H1 (cell line): ENCODE measurements at regions of chr17 and their contacts with region 1.

Region 1: DNA sequence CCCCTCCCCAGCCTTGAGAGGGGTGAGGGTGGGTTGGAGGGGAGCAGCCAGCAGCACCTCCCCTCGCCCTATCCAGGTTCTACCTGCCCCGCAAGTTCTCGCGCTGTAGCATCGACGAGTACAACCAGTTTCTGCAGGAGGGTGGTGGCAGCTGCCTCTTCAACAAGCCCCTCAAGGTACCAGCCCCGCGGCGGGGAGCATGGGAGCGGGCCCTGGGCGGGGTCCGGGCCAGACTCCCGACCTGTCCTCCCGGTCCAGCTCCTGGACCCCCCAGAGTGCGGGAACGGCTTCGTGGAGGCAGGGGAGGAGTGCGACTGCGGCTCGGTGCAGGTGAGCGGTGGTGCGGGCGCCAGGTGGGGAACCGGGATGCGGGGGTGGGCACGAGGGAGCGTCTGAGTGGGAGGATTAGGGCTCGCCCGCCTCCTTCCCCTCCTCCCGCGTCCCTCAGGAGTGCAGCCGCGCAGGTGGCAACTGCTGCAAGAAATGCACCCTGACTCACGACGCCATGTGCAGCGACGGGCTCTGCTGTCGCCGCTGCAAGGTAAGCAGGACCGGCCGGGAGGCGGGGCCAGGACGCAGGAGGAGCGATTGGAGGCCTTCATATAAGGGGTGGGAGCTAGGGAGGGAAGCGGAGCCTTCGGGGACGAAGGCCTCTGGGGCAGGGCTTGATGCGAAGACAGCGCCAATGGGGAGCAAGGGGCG is 16.5 kb downstream of the ADAM11 start:
- DNase-seq: peak; percentile 99
- H3K4me3 ChIP-seq: peak overlapping the region; percentile 45 to 76 (median 59)
- H3K27ac ChIP-seq: no peak overlapping the region
- H3K4me1 ChIP-seq: peaks cover 0 to 14% (median 4%) of the 10 kb centered on the region in 4 experiments; a peak in 5 of 7 replicates
- H3K27me3 ChIP-seq: peaks cover 3 to 18% (median 12%) of the 10 kb centered on the region in 4 experiments; a peak in 6 of 7 replicates
- CTCF ChIP-seq: no peak
- EP300 ChIP-seq: no peak
- POLR2A ChIP-seq: peak in 1 of 2 experiments; percentile 54; a peak in 2 of 3 replicates
- RAD21 ChIP-seq: no peak

Region 2: DNA sequence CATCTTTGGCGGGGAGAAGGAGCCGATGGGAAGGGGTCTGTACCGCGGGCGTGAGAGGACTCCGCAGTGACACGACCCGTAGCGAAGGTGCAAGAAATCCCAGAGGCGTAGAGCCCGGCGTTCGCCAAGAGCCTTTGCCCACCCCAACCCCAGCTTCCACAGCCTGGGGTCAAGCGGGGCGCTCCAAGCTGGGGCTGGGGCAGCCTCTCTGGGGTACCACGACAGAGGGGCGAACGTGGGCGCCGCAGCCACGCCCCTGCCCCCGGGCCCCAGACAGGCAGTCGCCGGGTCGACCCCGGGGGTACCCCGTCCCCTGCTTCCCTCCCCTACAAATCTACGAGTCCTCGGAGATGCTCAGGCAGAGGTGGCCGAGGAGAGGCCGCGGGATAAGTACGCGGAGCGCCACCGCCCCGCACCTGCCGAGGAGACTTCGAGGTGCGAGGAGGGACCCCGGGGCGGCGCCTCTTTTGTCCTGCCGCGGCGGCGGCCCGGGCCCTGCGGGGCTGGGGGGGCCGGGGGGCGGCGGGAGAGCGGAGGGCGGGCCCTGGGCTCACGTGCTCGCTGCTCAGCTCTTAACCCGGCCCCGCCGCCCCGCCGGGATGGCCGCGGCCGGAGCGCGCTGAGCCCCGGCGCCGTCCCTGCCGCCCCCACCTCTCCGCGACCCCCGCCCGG is 16.7 kb before region 1 on chr17 and contains the start of gene ADAM11:
- CTCF ChIA-PET with region 1: interaction called, 16 read pairs
- POLR2A ChIA-PET with region 1: interaction called, 11 read pairs
- DNase-seq: peak in 1 of 2 experiments; percentile 80
- H3K4me3 ChIP-seq: peak within 1 kb of the TSS; percentile 24 to 68 (median 42)
- H3K27ac ChIP-seq: no peak within 1 kb of the TSS
- H3K4me1 ChIP-seq: peaks cover 0 to 7% (median 2%) of the 10 kb centered on the region in 4 experiments; a peak in 4 of 7 replicates
- H3K27me3 ChIP-seq: peaks cover 25 to 40% (median 34%) of the 10 kb centered on the region in 4 experiments
- CTCF ChIP-seq: no peak
- EP300 ChIP-seq: no peak
- POLR2A ChIP-seq: no peak
- RAD21 ChIP-seq: no peak
- total RNA-seq, gene ADAM11: 2.8 and 2.9 TPM in 2 replicates

Region 3: DNA sequence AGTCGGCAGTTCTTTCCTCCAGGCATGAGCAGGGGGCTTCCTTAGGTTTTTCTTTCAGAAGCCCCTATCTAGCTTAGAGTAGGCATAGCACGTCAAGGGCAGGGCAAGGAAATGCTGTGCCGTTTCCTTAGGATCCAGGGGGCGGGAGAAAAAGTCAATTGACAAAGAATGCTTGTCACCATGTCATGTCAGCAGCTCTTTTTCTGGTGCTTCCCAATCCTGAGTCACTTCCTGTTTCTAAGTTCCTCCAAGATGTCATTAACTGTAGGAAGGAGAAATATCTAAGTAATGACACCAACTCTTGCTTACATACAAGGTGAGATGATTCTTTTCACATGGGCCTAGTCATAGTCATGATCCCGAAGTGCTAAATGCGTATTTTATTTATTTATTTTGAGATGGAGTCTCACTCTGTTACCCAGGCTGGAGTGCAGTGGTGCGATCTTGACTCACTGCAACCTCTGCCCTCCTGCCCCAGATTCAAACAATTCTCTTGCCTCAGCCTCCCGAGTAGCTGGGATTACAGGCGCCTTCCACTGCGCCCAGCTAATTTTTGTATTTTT is 19.6 kb after region 1 on chr17:
- CTCF ChIA-PET with region 1: interaction called, 22 read pairs
- POLR2A ChIA-PET with region 1: interaction called, 9 read pairs
- DNase-seq: no peak
- H3K4me3 ChIP-seq: no peak overlapping the region
- H3K27ac ChIP-seq: no peak overlapping the region
- H3K4me1 ChIP-seq: peaks cover 0 to 3% (median 1%) of the 10 kb centered on the region in 4 experiments; a peak in 2 of 7 replicates
- H3K27me3 ChIP-seq: no peaks in the 10 kb centered on the region
- CTCF ChIP-seq: no peak
- EP300 ChIP-seq: no peak
- POLR2A ChIP-seq: no peak
- RAD21 ChIP-seq: no peak

Region 4: DNA sequence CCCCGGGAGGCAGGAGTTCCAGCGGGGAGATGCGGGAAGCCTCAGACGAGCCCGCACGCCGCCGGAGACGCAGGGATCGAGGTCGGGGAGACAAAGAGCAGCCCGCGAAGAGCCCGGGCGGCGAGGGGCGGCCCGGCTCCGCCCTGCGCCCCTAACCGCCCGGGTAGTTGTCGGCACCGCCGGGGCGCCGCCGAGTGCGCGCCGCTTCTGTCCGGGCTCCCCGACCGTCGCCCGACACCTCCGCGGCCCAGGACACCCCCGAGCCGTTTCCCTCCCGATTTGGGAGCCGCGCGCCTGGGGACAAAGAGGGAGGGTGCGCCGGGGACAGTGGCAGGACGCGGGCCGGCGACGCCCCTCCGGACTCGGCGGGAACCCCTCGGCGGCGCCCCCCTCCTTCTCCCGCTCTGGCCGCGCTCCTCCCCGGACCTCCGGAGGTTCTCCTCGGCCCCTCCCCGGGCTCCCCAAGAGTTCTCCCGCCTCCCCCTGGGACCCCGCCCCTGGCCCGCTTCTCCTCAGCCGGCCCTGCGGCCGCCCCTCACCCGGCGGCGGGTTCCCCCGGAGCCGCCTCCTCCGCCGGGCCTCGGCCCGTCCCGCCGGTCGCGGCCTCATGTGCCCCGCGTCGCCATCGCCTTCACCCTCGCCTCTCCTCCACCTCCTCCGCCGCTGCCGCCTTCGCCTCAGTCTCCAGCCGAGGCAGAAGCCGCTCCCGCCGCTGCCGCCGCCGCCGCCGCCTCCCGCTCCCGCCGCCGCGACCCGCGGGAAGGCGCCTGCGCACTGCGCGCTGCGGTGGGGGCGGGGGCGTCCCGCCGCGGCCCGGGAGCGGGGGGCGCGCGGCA is 54.5 kb after region 1 on chr17 and contains the start of gene GJC1:
- CTCF ChIA-PET with region 1: interaction called, 35 read pairs
- POLR2A ChIA-PET with region 1: interaction called, 14 read pairs
- DNase-seq: peak in 1 of 2 experiments; percentile 83
- H3K4me3 ChIP-seq: peak within 1 kb of the TSS; percentile 79 to 97 (median 92)
- H3K27ac ChIP-seq: peak within 1 kb of the TSS; percentile 86
- H3K4me1 ChIP-seq: peaks cover 0 to 7% (median 5%) of the 10 kb centered on the region in 4 experiments; a peak in 4 of 7 replicates
- H3K27me3 ChIP-seq: no peaks in the 10 kb centered on the region
- CTCF ChIP-seq: no peak
- EP300 ChIP-seq: no peak
- POLR2A ChIP-seq: peak; percentile 44 to 51
- RAD21 ChIP-seq: no peak
- total RNA-seq, gene GJC1: 154 and 156 TPM in 2 replicates

Region 5: DNA sequence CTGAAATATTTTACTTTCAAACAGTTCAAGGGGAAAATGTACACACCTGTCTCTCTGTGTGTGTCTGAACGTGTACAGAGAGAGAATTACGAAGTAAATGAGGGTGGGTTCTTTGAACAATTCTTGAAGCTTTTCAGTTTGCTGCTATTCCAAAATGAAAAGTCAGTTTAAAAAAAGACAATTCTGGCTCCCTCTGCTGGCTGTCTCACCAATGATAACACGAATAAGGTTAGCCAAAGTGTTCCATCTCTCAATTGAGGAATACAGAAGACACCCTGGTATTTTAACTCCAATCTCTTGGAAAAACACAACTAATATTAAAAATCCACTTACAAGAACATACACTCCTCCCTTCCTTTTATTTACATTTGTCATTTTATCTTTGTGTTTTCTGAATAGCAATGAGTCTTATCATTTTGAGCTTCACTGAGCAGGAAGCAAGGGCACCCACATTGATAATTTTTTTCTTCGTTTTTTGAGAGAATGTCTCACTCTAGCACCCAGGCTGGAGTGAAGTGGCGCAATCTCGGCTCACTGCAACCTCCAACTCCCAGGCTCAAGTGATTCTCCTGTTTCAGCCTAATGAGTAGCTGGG is 103.4 kb after region 1 on chr17:
- CTCF ChIA-PET with region 1: interaction called, 141 read pairs
- POLR2A ChIA-PET with region 1: interaction called, 3 read pairs
- DNase-seq: no peak
- H3K4me3 ChIP-seq: no peak overlapping the region
- H3K27ac ChIP-seq: no peak overlapping the region
- H3K4me1 ChIP-seq: no peaks in the 10 kb centered on the region
- H3K27me3 ChIP-seq: no peaks in the 10 kb centered on the region
- CTCF ChIP-seq: peak in 2 of 3 experiments; percentile 39 to 61; a peak in 2 of 4 replicates
- EP300 ChIP-seq: no peak
- POLR2A ChIP-seq: no peak
- RAD21 ChIP-seq: peak; percentile 41 to 44